ENCODE measurements at regions of chr12 and their contacts with region 1.

Region 1: GRCh38 chr12:85575120-85576096 is 260.8 kb downstream of the RASSF9 start:
- DNase-seq: peak; percentile 80
- H3K4me3 ChIP-seq: no peak overlapping the region
- H3K27ac ChIP-seq: no peak overlapping the region
- H3K4me1 ChIP-seq: peaks cover 3% of the 10 kb centered on the region
- H3K27me3 ChIP-seq: no peaks in the 10 kb centered on the region
- CTCF ChIP-seq: peak; percentile 62 to 66
- POLR2A ChIP-seq: no peak

Region 2: GRCh38 chr12:85363382-85364190 is 211.8 kb before region 1 on chr12:
- CTCF ChIA-PET with region 1: no interaction called
- POLR2A ChIA-PET with region 1: no interaction called
- dilution Hi-C with region 1: no loop called
- intact Hi-C with region 1: no loop called
- DNase-seq: peak; percentile 91
- H3K4me3 ChIP-seq: no peak overlapping the region
- H3K27ac ChIP-seq: peak overlapping the region; percentile 19
- H3K4me1 ChIP-seq: peaks cover 18% of the 10 kb centered on the region
- H3K27me3 ChIP-seq: no peaks in the 10 kb centered on the region
- CTCF ChIP-seq: no peak
- POLR2A ChIP-seq: no peak

Region 3: DNA sequence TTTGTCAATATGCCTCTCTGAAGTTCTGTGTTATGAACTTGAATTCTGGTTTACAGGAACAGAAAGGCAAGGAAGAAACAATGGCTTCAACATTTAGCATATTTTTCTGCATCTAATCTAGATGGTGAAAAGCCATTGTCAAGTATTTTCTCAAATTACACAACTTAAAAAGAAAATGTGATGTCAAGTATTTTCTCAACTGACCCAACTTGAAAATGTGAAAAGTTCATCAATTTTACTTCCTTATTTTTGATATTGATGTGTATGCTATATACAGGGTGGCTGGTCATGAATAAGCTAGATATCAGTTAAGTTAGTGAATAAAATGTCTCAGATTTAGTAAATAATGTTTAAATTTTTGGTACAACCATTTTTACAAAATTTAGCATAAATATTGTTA is 98.7 kb before region 1 on chr12:
- CTCF ChIA-PET with region 1: interaction called, 7 read pairs
- POLR2A ChIA-PET with region 1: no interaction called
- dilution Hi-C with region 1: no loop called
- intact Hi-C with region 1: loop called (anchors 10 kb)
- DNase-seq: no peak
- H3K4me3 ChIP-seq: no peak overlapping the region
- H3K27ac ChIP-seq: no peak overlapping the region
- H3K4me1 ChIP-seq: no peaks in the 10 kb centered on the region
- H3K27me3 ChIP-seq: no peaks in the 10 kb centered on the region
- CTCF ChIP-seq: no peak
- POLR2A ChIP-seq: no peak

Region 4: DNA sequence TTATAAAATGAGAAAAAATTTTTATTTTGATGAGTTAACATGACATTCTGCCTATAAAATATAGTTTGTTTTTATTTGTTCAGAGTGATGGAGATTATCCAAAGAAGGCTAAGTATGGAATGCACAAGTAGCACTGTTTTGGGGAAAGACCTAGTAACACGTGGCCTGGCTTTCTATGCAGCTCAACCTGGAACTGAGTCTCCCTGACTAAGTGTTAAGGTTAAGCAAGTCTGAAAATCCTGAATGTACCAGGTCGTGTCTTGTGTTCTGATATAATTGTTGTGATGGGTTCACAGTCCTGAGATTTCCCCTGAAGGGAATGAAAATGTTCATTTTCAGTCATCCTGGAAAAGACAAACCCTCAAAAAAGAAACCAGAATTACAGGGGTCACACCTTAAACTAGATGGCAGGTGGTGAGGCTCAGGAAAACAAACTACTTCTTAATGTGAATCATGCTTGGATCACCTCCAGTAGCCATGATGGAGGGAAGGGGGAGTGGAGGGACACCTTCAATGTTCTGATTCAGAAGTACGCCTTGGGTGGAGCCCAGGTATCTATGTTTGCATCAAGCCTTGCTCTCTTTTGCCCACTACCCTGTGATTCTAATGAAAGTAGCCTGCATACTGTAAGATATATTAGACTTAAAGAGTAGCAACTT is 58.6 kb before region 1 on chr12:
- CTCF ChIA-PET with region 1: no interaction called
- POLR2A ChIA-PET with region 1: no interaction called
- dilution Hi-C with region 1: no loop called
- intact Hi-C with region 1: no loop called
- DNase-seq: no peak
- H3K4me3 ChIP-seq: no peak overlapping the region
- H3K27ac ChIP-seq: no peak overlapping the region
- H3K4me1 ChIP-seq: no peaks in the 10 kb centered on the region
- H3K27me3 ChIP-seq: no peaks in the 10 kb centered on the region
- CTCF ChIP-seq: no peak
- POLR2A ChIP-seq: no peak

Region 5: GRCh38 chr12:85626001-85626781 is 50.8 kb after region 1 on chr12:
- CTCF ChIA-PET with region 1: interaction called, 6 read pairs
- POLR2A ChIA-PET with region 1: no interaction called
- dilution Hi-C with region 1: no loop called
- intact Hi-C with region 1: loop called (anchors 2 kb)
- DNase-seq: peak; percentile 95
- H3K4me3 ChIP-seq: no peak overlapping the region
- H3K27ac ChIP-seq: peak overlapping the region; percentile 92
- H3K4me1 ChIP-seq: peaks cover 26% of the 10 kb centered on the region
- H3K27me3 ChIP-seq: no peaks in the 10 kb centered on the region
- CTCF ChIP-seq: no peak
- POLR2A ChIP-seq: peak; percentile 73

Region 6: GRCh38 chr12:85823436-85824180 is 248.2 kb after region 1 on chr12:
- CTCF ChIA-PET with region 1: interaction called, 10 read pairs
- POLR2A ChIA-PET with region 1: no interaction called
- dilution Hi-C with region 1: no loop called
- intact Hi-C with region 1: no loop called
- DNase-seq: peak; percentile 58
- H3K4me3 ChIP-seq: no peak overlapping the region
- H3K27ac ChIP-seq: no peak overlapping the region
- H3K4me1 ChIP-seq: peaks cover 22% of the 10 kb centered on the region
- H3K27me3 ChIP-seq: no peaks in the 10 kb centered on the region
- CTCF ChIP-seq: no peak
- POLR2A ChIP-seq: no peak

Region 7: DNA sequence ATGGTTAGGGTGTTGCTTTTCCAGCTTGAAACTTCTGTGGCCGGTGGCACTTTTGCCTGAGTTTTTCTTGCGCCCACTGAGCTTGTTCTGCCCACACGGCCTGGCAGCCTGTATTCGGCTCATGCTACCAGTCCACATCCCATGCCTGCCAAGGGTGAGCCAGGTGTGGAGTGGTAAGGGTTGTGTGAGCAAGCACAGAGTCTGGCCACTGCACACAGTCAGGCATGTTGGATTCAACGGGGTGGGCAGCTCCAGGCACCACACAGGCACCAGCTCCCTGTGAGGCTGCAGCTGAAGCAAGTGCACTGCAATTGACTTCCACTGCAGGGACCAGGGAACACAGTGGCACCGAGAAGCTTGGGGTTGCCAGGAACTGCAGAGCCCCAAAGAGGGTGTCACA is 279.9 kb after region 1 on chr12:
- CTCF ChIA-PET with region 1: interaction called, 23 read pairs
- POLR2A ChIA-PET with region 1: no interaction called
- dilution Hi-C with region 1: no loop called
- intact Hi-C with region 1: no loop called
- DNase-seq: no peak
- H3K4me3 ChIP-seq: no peak overlapping the region
- H3K27ac ChIP-seq: no peak overlapping the region
- H3K4me1 ChIP-seq: no peaks in the 10 kb centered on the region
- H3K27me3 ChIP-seq: no peaks in the 10 kb centered on the region
- CTCF ChIP-seq: no peak
- POLR2A ChIP-seq: no peak